ENCODE measurements at regions of chr19 and their contacts with region 1.

Region 1: GRCh38 chr19:37007587-37008220 is 70.5 kb upstream of the ZNF420 start:
- DNase-seq: peak; percentile 82 to 87
- ATAC-seq: peak; percentile 91 to 97 (median 93)
- H3K4me3 ChIP-seq: peak overlapping the region; percentile 39 to 70 (median 61)
- H3K27ac ChIP-seq: peak overlapping the region in 9 of 10 donors; percentile 4 to 74 (median 69)
- H3K4me1 ChIP-seq: peaks cover 0 to 13% (median 2%) of the 10 kb centered on the region in 9 donors
- H3K27me3 ChIP-seq: no peaks in the 10 kb centered on the region
- CTCF ChIP-seq: peak in 1 of 9 donors; percentile 5

Region 2: GRCh38 chr19:36051236-36051635 is 956.5 kb before region 1 on chr19:
- intact Hi-C with region 1: no loop called
- DNase-seq: no peak
- ATAC-seq: no peak
- H3K4me3 ChIP-seq: no peak overlapping the region
- H3K27ac ChIP-seq: no peak overlapping the region
- H3K4me1 ChIP-seq: peaks cover 3 to 21% (median 16%) of the 10 kb centered on the region in 9 donors
- H3K27me3 ChIP-seq: no peaks in the 10 kb centered on the region
- CTCF ChIP-seq: peak in 5 of 9 donors; percentile 14 to 34 (median 24)

Region 3: DNA sequence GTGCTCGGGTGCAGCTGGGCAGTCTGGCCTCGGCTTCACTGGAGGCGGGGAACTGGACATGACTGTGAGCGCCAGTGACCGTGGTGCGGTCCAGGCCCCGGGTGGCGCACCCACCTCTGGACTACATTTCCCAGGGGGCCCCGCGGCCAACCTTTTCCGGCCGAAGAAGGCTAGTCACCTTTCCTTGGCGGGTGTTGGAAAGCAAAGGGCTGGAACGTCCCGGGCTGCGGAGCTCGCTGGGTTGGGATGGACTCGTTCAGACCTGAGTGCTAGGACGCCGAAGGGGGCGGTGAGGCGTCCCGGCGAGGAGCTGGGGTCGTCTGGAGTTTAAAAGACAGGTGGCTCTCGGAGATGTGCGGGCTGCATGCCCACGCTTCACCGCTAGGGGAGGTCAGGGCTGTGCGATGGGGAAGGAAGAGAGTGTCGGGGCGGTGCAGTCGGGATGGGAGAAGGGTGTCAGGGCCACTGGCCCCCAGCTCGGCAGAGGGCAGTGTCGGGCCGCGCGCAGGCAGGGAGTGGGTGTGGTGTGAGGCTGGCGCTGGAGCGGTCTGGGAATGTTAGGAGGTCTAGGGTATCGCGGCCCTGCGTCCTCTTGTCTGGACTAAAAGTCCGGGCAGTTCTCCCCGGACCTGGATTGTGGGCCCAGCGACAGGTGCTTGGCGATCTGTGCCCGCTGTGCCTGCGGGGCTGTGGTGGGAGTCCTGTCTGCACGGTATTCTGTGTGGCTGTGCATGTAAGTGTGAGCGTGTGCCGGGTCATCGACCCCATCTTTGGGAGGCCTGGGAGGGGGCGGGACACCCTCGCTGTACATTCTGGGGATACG is 34.5 kb before region 1 on chr19:
- intact Hi-C with region 1: no loop called
- DNase-seq: peak; percentile 89
- ATAC-seq: peak; percentile 97 to 100 (median 100)
- H3K4me3 ChIP-seq: peak overlapping the region; percentile 48 to 92 (median 74)
- H3K27ac ChIP-seq: peak overlapping the region; percentile 59 to 91 (median 74)
- H3K4me1 ChIP-seq: peaks cover 5 to 19% (median 14%) of the 10 kb centered on the region in 9 donors
- H3K27me3 ChIP-seq: no peaks in the 10 kb centered on the region
- CTCF ChIP-seq: peak; percentile 74 to 98 (median 94)

Region 4: GRCh38 chr19:37172368-37173366 is 165.0 kb after region 1 on chr19 and contains the start of gene ZNF585A:
- intact Hi-C with region 1: loop called in 1 of 10 experiments (anchors 1 kb)
- DNase-seq: peak; percentile 86 to 95
- ATAC-seq: peak; percentile 100
- H3K4me3 ChIP-seq: peak within 1 kb of the TSS; percentile 45 to 78 (median 62)
- H3K27ac ChIP-seq: peak within 1 kb of the TSS in 9 of 10 donors; percentile 47 to 82 (median 66)
- H3K4me1 ChIP-seq: peaks cover 0 to 11% (median 6%) of the 10 kb centered on the region in 9 donors
- H3K27me3 ChIP-seq: no peaks in the 10 kb centered on the region
- CTCF ChIP-seq: peak in 6 of 9 donors; percentile 26 to 57 (median 39)
- total RNA-seq, gene ZNF585A: 7.1 to 17.0 (median 13.0) TPM